ENCODE measurements at regions of chr15 and their contacts with region 1.

Region 1: GRCh38 chr15:49462232-49462844 is 39.3 kb downstream of the FGF7 start:
- DNase-seq: no peak
- ATAC-seq: peak in 1 of 4 donors; percentile 41
- H3K4me3 ChIP-seq: no peak overlapping the region
- H3K27ac ChIP-seq: peak overlapping the region in 5 of 12 donors; percentile 18 to 48 (median 21)
- H3K4me1 ChIP-seq: peaks cover 0 to 46% (median 12%) of the 10 kb centered on the region in 12 donors
- H3K27me3 ChIP-seq: no peaks in the 10 kb centered on the region
- CTCF ChIP-seq: no peak
- POLR2A ChIP-seq: no peak

Region 2: DNA sequence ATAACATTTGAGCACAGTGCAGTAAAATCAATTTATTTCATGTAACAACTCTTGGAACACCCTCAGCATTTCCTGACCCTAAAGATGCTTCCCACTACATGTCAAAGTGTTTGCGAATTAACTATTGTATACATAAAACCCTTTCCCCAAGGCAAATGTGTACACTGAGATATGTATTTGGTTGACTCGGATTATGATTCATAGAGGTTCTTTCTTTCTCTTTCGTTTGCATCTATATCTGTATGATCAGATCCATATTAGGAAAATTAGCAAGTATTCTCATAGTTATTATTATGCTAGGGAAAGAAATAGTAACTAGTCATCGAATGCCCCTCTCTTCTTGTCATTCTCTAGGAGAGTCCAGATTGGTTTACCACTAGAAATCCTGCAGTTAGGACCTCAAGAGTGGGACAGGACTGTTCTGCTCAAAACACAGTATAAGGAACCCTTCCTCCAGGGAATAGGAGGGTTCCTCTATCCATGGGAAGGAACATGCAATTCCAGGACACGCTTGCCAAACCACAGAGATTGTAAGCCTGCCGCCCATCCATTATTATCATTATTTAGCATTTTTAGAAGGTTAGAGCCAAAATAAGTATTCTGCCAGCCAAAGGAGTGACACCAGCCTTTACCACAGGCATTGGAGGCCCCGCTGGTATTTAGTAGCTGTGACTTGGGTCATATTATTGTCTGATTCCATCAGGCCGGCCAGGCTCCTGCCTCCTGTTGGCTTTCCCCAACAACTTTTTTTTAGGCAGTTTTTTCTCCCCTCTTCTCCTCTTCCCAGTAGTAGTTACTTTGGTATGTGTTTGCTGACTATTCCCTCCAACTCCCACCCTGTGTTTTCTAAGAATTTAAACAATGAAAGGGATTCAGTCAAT is 191.6 kb before region 1 on chr15:
- intact Hi-C with region 1: no loop called
- DNase-seq: peak in 2 of 5 donors; percentile 17 to 37
- ATAC-seq: peak; percentile 65 to 82 (median 77)
- H3K4me3 ChIP-seq: no peak overlapping the region
- H3K27ac ChIP-seq: peak overlapping the region in 8 of 12 donors; percentile 1 to 46 (median 20)
- H3K4me1 ChIP-seq: peaks cover 0 to 31% (median 6%) of the 10 kb centered on the region in 12 donors
- H3K27me3 ChIP-seq: no peaks in the 10 kb centered on the region
- CTCF ChIP-seq: no peak
- POLR2A ChIP-seq: no peak

Region 3: GRCh38 chr15:49428409-49429095 is 33.8 kb before region 1 on chr15:
- intact Hi-C with region 1: loop called in 1 of 10 experiments (anchors 5 kb)
- DNase-seq: peak; percentile 40 to 78 (median 50)
- ATAC-seq: peak; percentile 95 to 97 (median 96)
- H3K4me3 ChIP-seq: peak overlapping the region in 9 of 12 donors; percentile 10 to 62 (median 25)
- H3K27ac ChIP-seq: peak overlapping the region; percentile 43 to 77 (median 70)
- H3K4me1 ChIP-seq: peaks cover 0 to 25% (median 8%) of the 10 kb centered on the region in 12 donors
- H3K27me3 ChIP-seq: no peaks in the 10 kb centered on the region
- CTCF ChIP-seq: no peak
- POLR2A ChIP-seq: no peak

Region 4: GRCh38 chr15:49530106-49530505 is 67.8 kb after region 1 on chr15:
- intact Hi-C with region 1: no loop called
- DNase-seq: no peak
- ATAC-seq: no peak
- H3K4me3 ChIP-seq: no peak overlapping the region
- H3K27ac ChIP-seq: no peak overlapping the region
- H3K4me1 ChIP-seq: no peaks in the 10 kb centered on the region
- H3K27me3 ChIP-seq: no peaks in the 10 kb centered on the region
- CTCF ChIP-seq: no peak
- POLR2A ChIP-seq: no peak